Activated B cell treated with CpG ODN at 0.5 μM for 24 hours (primary cell): ENCODE measurements at regions of chr6 and their contacts with region 1.

Region 1: DNA sequence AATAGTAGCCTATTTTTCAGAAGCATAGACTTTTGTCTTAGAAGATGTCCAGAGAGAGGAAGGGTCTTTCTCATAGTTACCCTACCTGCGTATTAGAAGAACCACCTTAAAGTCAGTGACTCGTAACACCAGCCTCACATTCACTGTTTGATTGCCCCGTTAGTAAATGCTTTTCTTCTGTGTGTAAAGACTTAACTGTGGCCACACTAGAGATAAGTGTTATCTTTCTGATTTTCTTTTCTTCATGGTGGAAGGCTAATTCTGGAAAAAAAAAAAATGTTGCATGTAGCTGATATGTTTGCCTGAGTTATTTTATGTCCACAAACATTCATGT is 83.9 kb downstream of the SAMD3 start:
- DNase-seq: no peak
- ATAC-seq: no peak
- H3K4me3 Mint-ChIP-seq: no peak overlapping the region
- H3K27ac Mint-ChIP-seq: no peak overlapping the region
- H3K4me1 Mint-ChIP-seq: peaks cover 1% of the 10 kb centered on the region
- H3K27me3 Mint-ChIP-seq: no peaks in the 10 kb centered on the region
- CTCF ChIP-seq: no peak

Region 2: DNA sequence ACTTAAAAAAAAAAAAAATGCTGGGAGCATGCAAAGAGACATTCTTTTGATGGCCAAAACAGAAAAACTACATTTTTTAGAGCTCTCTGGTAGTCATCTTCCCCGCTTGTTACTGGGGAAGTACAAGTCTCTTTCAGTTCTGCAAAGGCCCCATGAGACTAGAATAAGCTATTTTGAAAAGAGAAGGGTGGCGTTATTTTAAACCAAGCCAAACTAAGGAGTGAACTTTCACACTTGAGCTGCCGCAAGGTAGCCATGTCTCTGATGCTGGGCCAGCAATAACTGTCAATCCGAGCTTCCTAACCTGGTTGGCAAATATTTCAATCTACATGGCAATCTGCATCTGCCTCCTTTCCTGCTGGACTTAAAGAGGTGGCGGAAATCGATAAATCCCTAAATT is 23.8 kb before region 1 on chr6:
- CTCF ChIA-PET with region 1: no interaction called
- POLR2A ChIA-PET with region 1: no interaction called
- intact Hi-C with region 1: loop called (anchors 1 kb)
- DNase-seq: no peak
- ATAC-seq: peak; percentile 91
- H3K4me3 Mint-ChIP-seq: peak overlapping the region; percentile 73
- H3K27ac Mint-ChIP-seq: peak overlapping the region; percentile 96
- H3K4me1 Mint-ChIP-seq: peaks cover 79% of the 10 kb centered on the region
- H3K27me3 Mint-ChIP-seq: no peaks in the 10 kb centered on the region
- CTCF ChIP-seq: no peak